ENCODE measurements at regions of chr3 and their contacts with region 1.

Region 1: GRCh38 chr3:10192953-10193691 is 28.4 kb downstream of the IRAK2 start:
- DNase-seq: peak; percentile 90
- H3K4me3 Mint-ChIP-seq: peak overlapping the region; percentile 12
- H3K27ac Mint-ChIP-seq: peak overlapping the region; percentile 69
- H3K4me1 Mint-ChIP-seq: peaks cover 47% of the 10 kb centered on the region
- H3K27me3 Mint-ChIP-seq: no peaks in the 10 kb centered on the region
- CTCF ChIP-seq: peak; percentile 51

Region 2: GRCh38 chr3:10142707-10143566 is 50.2 kb before region 1 on chr3:
- CTCF ChIA-PET with region 1: interaction called, 3 read pairs
- POLR2A ChIA-PET with region 1: interaction called, 41 read pairs
- intact Hi-C with region 1: no loop called
- DNase-seq: peak; percentile 38
- H3K4me3 Mint-ChIP-seq: peak overlapping the region; percentile 86
- H3K27ac Mint-ChIP-seq: peak overlapping the region; percentile 92
- H3K4me1 Mint-ChIP-seq: peaks cover 6% of the 10 kb centered on the region
- H3K27me3 Mint-ChIP-seq: no peaks in the 10 kb centered on the region
- CTCF ChIP-seq: no peak

Region 3: DNA sequence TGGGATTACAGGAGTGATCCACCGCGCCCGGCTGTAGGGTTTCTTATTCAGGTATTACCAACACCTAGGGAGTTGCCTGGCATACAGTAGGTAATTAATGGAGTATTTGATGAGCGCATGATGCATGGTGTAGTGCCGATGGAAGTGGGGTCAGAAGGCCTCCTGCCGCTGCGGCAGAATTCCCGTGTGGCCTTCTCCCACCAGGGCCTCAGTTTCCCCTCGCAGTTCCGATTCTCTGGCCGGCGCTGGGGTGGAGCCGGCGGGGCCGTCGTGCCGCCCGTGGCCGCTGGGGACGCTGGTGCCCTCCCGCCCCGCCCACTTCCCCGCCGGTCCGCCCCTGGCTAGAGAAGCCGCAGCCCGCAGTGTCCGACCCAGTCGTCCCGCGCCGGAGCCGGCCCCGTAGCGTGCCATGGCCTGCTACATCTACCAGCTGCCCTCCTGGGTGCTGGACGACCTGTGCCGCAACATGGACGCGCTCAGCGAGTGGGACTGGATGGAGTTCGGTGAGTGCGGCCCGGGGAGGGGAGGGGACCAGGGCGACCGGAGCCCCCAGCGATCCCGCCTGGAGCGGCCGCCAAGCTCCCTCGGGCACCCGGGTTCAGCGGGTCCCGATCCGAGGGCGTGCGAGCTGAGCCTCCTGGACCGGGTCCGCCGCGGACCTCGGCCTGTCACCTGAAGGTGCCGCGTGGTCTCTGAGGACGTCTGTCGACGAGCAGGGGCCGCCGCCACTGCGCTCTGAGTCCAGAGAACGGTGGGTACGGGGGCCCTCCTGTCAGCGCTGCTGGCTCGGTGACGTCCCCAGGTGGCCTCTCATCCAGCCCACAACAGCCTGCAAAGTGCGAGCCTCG is 28.4 kb before region 1 on chr3 and contains the start of gene IRAK2:
- CTCF ChIA-PET with region 1: interaction called, 5 read pairs
- POLR2A ChIA-PET with region 1: interaction called, 3 read pairs
- intact Hi-C with region 1: loop called (anchors 2 kb)
- DNase-seq: peak; percentile 58
- H3K4me3 Mint-ChIP-seq: peak within 1 kb of the TSS; percentile 69
- H3K27ac Mint-ChIP-seq: no peak within 1 kb of the TSS
- H3K4me1 Mint-ChIP-seq: no peaks in the 10 kb centered on the region
- H3K27me3 Mint-ChIP-seq: no peaks in the 10 kb centered on the region
- CTCF ChIP-seq: peak; percentile 91
- total RNA-seq, gene IRAK2: 6.0 and 7.0 TPM in 2 replicates

Region 4: DNA sequence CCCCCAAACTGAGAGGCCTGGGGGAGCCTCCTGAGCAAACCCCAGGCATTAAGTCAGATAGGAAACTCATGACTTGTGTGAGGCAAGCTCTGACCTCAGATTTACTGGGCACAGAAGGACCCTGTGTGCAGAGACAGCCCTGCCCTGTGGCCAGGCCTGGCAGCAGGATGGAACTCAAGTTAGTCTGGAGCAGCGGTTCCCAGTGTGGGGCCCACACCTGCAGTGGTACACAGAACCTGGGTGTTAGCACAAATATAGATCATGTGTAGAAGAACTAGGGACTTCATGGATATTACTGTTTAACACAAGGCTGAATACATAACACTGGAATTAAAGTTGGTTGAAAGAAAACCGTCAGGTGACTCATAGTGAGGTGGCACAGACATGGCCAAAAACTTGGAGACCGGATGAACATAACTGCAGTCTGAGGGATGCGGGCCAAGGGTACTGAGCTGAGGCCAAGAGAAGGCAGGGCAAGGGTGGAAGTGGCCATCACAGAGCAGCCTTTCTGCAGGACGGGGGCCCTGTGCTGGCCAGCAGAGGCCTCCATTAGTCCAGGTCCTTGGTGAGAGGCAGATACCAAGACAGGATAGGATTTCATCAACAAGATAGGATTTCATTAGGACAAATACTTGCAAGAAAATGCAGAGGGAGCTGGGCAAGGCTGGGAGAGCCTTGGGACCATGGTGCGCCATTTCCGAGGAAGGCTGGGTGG is 12.5 kb after region 1 on chr3:
- CTCF ChIA-PET with region 1: interaction called, 13 read pairs
- POLR2A ChIA-PET with region 1: interaction called, 87 read pairs
- intact Hi-C with region 1: no loop called
- DNase-seq: peak; percentile 96
- H3K4me3 Mint-ChIP-seq: peak overlapping the region; percentile 46
- H3K27ac Mint-ChIP-seq: peak overlapping the region; percentile 77
- H3K4me1 Mint-ChIP-seq: peaks cover 8% of the 10 kb centered on the region
- H3K27me3 Mint-ChIP-seq: no peaks in the 10 kb centered on the region
- CTCF ChIP-seq: no peak

Region 5: DNA sequence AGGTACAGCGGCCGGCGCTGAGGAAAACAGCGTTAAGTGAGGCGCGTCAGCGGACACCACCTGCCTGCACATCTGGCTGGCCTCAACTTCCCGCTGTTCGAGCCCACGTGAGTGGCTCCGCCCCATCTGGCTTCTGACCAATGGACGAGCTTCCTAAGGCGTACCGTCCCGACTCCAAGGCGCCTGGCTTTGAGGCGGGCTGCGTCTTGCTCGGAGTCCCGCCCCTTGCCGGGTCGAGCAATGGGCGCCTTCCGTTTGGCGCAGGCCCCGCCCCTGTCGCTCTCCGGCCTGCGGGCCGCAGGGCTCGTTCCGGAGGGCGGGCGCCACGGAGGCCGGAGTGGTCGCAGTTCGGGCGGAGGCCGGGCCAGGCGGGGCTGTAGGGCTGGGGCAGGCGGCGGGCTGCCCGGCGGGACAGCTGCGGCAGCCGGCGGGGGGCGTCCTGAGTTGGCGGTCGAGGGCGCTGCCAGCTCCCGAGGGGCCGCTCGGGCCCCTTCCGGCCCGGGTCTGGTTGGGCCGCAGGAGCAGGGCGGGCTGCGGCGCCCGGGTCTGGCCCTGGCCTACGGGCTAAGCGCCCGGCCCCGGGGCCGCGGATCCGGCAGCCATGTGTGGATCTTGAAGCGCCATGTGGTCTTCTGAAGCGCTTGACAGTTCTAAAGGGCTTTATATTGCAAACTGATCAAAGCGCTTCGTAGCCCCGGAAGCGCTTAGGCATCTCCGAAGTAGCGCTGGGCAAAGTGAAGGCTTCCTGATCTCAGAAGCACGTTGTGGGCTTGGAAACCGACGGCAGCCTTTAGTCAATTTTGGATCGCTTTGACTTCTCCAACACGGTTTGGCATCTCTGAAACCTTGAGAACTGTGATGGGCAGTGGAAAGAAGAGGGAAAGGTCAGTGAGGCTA is 55.3 kb after region 1 on chr3 and contains the start of gene TATDN2:
- CTCF ChIA-PET with region 1: interaction called, 3 read pairs
- POLR2A ChIA-PET with region 1: interaction called, 12 read pairs
- intact Hi-C with region 1: no loop called
- DNase-seq: peak; percentile 98
- H3K4me3 Mint-ChIP-seq: peak within 1 kb of the TSS; percentile 90
- H3K27ac Mint-ChIP-seq: peak within 1 kb of the TSS; percentile 69
- H3K4me1 Mint-ChIP-seq: peaks cover 32% of the 10 kb centered on the region
- H3K27me3 Mint-ChIP-seq: no peaks in the 10 kb centered on the region
- CTCF ChIP-seq: no peak
- total RNA-seq, gene TATDN2: 21.0 and 25.9 TPM in 2 replicates